Esophagus muscularis mucosa (tissue), 4 donors: ENCODE measurements at regions of chr14 and their contacts with region 1.

Region 1: GRCh38 chr14:103292426-103293374 is 41.3 kb upstream of the EIF5 start:
- DNase-seq: no peak
- H3K4me3 ChIP-seq: no peak overlapping the region
- H3K27ac ChIP-seq: no peak overlapping the region
- H3K4me1 ChIP-seq: peaks cover 0 to 5% (median 0%) of the 10 kb centered on the region in 4 donors
- H3K27me3 ChIP-seq: peaks cover 0 to 47% (median 0%) of the 10 kb centered on the region in 4 donors
- CTCF ChIP-seq: peak; percentile 89 to 93 (median 91)
- EP300 ChIP-seq: no peak
- POLR2A ChIP-seq: no peak

Region 2: GRCh38 chr14:103078093-103078749 is 214.5 kb before region 1 on chr14:
- intact Hi-C with region 1: loop called (anchors 10 kb)
- DNase-seq: no peak
- H3K4me3 ChIP-seq: no peak overlapping the region
- H3K27ac ChIP-seq: no peak overlapping the region
- H3K4me1 ChIP-seq: peaks cover 23 to 32% (median 28%) of the 10 kb centered on the region in 4 donors
- H3K27me3 ChIP-seq: peaks cover 0 to 38% (median 0%) of the 10 kb centered on the region in 4 donors
- CTCF ChIP-seq: peak; percentile 62 to 78 (median 76)
- EP300 ChIP-seq: no peak
- POLR2A ChIP-seq: no peak

Region 3: DNA sequence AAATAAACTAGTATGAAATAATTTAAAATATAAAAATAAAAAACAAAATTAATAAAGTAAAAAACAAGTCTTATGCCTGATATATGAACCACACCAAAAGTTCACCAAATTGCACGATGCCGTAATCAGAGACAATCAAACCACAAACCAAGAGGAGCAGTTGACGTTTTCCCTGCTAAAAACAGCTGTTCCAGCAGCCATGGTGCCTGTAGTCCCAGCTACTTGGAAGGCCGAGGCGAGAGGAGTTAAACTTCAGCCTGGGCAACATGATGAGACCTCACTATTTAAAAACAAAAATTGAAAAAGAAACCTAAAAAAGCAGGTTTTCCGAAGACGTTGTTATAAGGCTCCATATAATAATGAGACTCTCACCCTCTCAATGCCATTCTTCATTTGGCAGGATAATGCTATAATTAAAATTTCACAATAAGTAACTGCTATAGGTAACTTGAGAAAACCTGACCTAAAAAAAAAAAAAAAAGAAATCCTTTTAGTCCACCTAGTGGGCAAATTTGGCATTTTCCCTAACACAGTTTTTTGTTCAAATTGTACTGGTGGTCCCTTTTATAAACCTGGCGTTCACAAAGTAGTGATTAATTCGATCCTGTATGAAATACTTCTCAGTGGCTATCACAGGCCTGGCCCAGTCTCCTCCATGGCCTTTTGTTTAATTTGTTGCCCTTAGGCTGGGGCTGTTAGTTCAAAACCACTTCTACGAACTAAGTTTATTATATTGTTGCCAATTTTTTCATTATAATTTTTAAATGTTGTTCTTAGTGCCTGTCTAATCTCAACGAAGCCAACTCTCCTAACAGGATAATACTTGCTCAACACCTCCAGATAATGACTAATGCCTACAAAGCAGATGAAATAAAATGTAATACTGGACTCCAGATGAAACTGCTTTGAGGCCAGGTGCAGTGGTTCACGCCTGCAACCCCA is 107.4 kb before region 1 on chr14:
- intact Hi-C with region 1: loop called (anchors 5 kb)
- DNase-seq: no peak
- H3K4me3 ChIP-seq: no peak overlapping the region
- H3K27ac ChIP-seq: no peak overlapping the region
- H3K4me1 ChIP-seq: peaks cover 5 to 23% (median 12%) of the 10 kb centered on the region in 4 donors
- H3K27me3 ChIP-seq: peaks cover 0 to 45% (median 17%) of the 10 kb centered on the region in 4 donors
- CTCF ChIP-seq: peak; percentile 66 to 69 (median 67)
- EP300 ChIP-seq: no peak
- POLR2A ChIP-seq: no peak